ENCODE measurements at regions of chr17 and their contacts with region 1.

Region 1: DNA sequence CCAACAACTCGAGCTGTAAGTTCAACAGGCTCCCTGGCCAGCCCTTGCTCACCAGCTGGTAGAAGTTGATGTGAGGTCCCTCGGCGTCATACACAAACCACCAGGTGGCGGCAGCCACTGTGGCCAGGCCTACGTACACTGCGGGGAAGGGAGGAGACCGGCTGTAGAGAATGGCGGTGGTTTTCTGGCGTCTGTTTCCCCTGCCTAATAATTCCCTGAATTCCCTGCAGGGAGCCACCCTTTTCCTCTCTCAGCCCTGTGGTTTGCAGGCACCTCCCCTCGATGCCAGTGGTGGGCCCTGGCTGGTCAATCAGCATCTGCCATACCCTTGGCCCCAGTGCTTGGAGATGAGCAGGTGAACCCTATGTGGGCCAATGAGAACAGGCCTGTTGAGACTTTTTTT is 18.9 kb upstream of the P2RX1 start:
- DNase-seq: peak; percentile 83 to 93 (median 92)
- H3K4me3 ChIP-seq: no peak overlapping the region
- H3K27ac ChIP-seq: no peak overlapping the region
- H3K4me1 ChIP-seq: peaks cover 0 to 5% (median 0%) of the 10 kb centered on the region in 4 experiments
- H3K27me3 ChIP-seq: no peaks in the 10 kb centered on the region

Region 2: GRCh38 chr17:3924512-3925268 is 10.5 kb before region 1 on chr17:
- CTCF ChIA-PET with region 1: interaction called, 10 read pairs
- POLR2A ChIA-PET with region 1: interaction called, 4 read pairs
- DNase-seq: no peak
- H3K4me3 ChIP-seq: no peak overlapping the region
- H3K27ac ChIP-seq: no peak overlapping the region
- H3K4me1 ChIP-seq: peaks cover 0 to 6% (median 0%) of the 10 kb centered on the region in 4 experiments
- H3K27me3 ChIP-seq: no peaks in the 10 kb centered on the region

Region 3: GRCh38 chr17:3986270-3986938 is 51.3 kb after region 1 on chr17:
- CTCF ChIA-PET with region 1: no interaction called
- POLR2A ChIA-PET with region 1: no interaction called
- DNase-seq: no peak
- H3K4me3 ChIP-seq: no peak overlapping the region
- H3K27ac ChIP-seq: no peak overlapping the region
- H3K4me1 ChIP-seq: peaks cover 0 to 15% (median 7%) of the 10 kb centered on the region in 4 experiments
- H3K27me3 ChIP-seq: no peaks in the 10 kb centered on the region

Measured in common myeloid progenitor, CD34-positive (primary cell).